Ovary (tissue), 10 donors: ENCODE measurements at regions of chr15 and their contacts with region 1.

Region 1: DNA sequence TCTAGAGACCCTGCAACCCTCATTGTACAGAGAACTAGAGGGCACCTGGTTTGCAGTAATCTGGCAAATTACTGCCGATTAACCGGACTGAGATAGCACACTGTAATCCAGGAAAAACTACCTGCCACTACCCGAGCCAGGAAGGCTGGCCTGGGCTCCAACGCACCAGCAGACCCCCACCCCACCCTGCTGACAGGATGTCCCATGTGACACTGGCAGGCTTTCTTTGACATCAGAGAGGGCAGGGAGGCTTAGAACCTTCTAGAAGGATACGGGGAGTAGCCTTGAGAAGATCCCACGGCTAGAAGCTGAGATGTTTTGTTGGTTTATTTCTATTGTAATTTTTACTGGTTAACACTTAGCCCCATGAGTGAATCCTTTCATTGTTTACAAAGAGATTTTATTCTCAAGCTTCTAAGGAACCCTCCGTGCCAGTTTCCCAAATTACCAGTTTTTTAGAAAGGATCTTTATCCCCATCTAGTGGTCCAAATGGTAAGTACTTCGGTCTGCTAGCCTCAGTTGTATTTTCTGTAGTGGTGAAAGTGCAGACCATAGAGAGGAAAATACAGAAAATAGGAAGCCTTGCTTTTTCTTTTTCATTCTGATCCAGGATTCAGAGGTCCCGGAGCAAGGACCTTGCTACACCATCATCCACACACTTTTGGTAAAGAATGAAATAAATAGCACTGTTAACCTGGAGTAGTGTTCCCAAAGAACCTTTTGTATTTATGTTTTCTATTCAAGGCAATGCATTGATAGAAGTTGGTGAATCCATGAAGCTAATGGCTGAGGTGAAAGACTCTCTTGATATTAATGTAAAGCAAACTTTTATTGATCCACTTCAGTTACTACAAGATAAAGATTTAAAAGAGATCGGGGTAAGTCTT is 81.9 kb upstream of the ADAMTSL3 start:
- DNase-seq: no peak
- H3K4me3 ChIP-seq: no peak overlapping the region
- H3K27ac ChIP-seq: no peak overlapping the region
- H3K4me1 ChIP-seq: no peaks in the 10 kb centered on the region
- H3K27me3 ChIP-seq: no peaks in the 10 kb centered on the region
- CTCF ChIP-seq: peak; percentile 10 to 36 (median 13)
- EP300 ChIP-seq: no peak
- POLR2A ChIP-seq: no peak

Region 2: DNA sequence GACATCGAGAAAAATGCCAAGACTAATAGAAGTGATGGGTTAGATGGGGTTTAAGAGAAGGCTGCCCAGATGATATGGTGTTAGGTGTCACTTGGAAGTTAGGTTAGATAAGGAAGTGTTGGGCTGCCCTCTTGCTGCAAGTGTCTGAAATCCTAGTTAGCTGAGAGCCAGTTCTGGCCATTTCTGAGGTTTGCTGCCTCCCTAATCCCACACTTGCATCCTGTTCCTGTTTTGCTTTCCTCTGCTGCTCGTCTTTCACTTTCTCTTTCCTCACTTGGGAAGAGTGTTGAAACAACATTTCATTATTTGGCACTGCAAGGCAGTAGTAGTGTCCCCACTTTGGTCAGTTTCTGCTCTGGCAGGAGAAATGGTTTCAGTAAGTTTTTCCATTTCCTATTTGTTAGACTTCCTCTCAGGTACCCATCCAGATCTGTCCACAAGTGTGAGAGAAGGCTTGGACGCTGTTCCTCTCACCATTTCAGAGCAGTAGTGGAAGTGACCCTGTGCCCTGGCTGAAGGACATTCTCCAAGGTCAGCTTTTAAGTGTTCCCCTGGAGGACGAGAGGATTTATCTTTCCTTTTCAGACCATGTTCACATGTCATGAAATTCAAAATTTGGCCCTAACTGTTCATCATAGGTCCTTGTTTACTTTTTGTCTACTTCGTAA is 175.1 kb after region 1 on chr15:
- intact Hi-C with region 1: loop called in 1 of 4 experiments (anchors 10 kb)
- DNase-seq: peak; percentile 25 to 59 (median 33)
- H3K4me3 ChIP-seq: peak overlapping the region; percentile 15
- H3K27ac ChIP-seq: peak overlapping the region in 1 of 2 donors; percentile 69
- H3K4me1 ChIP-seq: peaks cover 8% of the 10 kb centered on the region
- H3K27me3 ChIP-seq: no peaks in the 10 kb centered on the region
- CTCF ChIP-seq: no peak
- EP300 ChIP-seq: no peak
- POLR2A ChIP-seq: no peak